ENCODE measurements at regions of chr1 and their contacts with region 1.

Region 1: DNA sequence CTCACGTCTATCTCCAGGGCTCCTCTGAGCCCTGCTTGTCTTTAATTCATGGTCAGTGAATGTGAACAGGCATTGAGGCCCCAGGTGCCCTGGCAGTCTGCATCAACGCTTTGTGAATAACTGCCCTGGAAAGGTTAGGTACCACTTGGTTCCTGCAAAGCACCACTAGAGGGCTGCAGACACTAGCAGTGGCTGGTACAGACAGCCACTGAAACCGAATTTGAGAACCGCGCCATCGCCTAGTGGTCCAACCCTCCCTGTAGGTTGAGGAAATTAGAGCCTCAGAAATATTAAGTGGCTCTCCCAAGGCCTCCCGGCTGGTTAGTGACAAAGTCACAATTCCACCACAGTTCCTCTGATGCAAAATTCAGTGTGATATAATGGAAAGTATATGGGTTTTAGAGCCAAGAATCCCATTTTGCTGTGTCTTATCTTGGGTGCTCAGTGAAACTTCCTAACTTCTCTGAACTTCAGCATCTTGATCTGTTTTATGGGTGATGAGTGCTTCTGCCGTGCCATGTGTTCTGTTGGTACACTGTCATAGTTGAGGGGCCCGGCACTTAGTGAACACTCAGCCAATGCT is 46.2 kb upstream of the BCL9 start:
- DNase-seq: peak; percentile 78 to 86
- ATAC-seq: peak; percentile 92
- H3K4me3 ChIP-seq: no peak overlapping the region
- H3K27ac ChIP-seq: no peak overlapping the region
- H3K4me1 ChIP-seq: no peaks in the 10 kb centered on the region
- H3K27me3 ChIP-seq: no peaks in the 10 kb centered on the region

Region 2: DNA sequence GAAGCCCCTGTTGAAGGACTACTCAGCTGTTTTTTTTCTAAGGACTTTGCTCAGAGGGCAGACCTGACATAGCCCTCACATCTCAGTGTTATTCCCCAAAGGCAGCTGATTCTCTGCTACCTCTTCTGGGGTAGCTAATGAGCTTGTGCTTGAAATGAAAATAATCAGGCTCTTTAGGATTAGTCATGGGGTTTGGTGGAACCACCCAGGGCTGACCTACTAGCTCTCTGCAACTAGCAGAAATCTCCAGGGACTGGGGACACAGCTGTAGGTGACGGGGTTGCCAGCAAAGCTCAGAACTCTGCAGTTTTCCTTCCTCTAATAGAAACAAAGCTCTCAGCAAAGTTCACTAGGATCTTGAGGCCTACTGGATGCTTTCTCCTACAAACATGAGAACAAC is 60.2 kb before region 1 on chr1:
- intact Hi-C with region 1: no loop called
- DNase-seq: no peak
- ATAC-seq: no peak
- H3K4me3 ChIP-seq: no peak overlapping the region
- H3K27ac ChIP-seq: no peak overlapping the region
- H3K4me1 ChIP-seq: no peaks in the 10 kb centered on the region
- H3K27me3 ChIP-seq: no peaks in the 10 kb centered on the region

Region 3: DNA sequence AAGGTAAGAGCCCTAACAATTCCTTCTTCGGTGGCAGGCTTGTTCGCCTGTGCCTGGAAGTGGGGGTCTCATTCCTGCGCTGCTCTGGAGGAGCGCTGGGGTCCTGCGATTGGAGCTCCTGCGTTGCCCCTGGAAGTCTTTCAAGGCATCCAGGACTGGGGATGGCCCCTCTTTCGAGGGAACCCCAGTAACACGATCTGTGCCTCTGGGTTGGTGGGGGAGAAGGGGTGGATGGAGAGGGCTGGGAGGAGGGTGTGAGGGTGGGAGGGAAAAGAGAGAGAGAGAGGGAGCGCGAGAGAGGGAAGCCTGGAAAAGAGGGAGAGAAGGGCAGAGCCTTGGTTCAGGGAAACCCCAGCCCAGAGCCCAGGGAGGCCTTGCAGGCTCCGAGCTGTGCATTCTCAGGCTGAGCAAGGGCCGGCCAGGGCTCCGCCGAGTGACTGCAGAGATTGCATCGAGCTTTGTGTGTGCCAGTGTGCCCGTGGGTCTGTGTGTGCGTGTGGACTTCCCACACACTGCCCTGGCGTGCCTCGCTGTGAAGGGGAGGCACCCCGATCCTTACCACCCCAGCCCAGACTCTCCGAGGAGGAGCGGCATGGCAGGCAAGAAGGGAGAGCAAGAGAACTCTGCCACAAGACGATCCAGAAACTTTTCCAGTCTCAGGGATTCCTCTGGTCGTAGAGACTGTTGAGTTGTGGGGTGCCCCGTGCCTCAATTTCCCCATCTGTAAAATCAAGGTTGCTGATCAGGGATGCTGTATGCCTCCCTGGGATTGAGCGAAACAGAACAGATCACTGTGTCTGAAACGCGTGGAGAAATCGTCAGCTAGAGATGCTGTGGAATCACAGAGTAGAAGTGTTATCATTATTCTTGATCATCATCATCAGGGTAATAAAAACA is 46.8 kb after region 1 on chr1:
- intact Hi-C with region 1: loop called (anchors 5 kb)
- DNase-seq: peak; percentile 66 to 82
- ATAC-seq: peak; percentile 81
- H3K4me3 ChIP-seq: peak overlapping the region; percentile 63 to 92
- H3K27ac ChIP-seq: peak overlapping the region; percentile 0 to 95
- H3K4me1 ChIP-seq: peaks cover 0 to 4% of the 10 kb centered on the region in 2 donors
- H3K27me3 ChIP-seq: no peaks in the 10 kb centered on the region

Region 4: GRCh38 chr1:147627435-147628110 is 132.5 kb after region 1 on chr1:
- intact Hi-C with region 1: loop called (anchors 2 to 5 kb)
- DNase-seq: peak in 1 of 2 donors; percentile 81
- ATAC-seq: peak; percentile 83
- H3K4me3 ChIP-seq: no peak overlapping the region
- H3K27ac ChIP-seq: no peak overlapping the region
- H3K4me1 ChIP-seq: no peaks in the 10 kb centered on the region
- H3K27me3 ChIP-seq: no peaks in the 10 kb centered on the region

Region 5: DNA sequence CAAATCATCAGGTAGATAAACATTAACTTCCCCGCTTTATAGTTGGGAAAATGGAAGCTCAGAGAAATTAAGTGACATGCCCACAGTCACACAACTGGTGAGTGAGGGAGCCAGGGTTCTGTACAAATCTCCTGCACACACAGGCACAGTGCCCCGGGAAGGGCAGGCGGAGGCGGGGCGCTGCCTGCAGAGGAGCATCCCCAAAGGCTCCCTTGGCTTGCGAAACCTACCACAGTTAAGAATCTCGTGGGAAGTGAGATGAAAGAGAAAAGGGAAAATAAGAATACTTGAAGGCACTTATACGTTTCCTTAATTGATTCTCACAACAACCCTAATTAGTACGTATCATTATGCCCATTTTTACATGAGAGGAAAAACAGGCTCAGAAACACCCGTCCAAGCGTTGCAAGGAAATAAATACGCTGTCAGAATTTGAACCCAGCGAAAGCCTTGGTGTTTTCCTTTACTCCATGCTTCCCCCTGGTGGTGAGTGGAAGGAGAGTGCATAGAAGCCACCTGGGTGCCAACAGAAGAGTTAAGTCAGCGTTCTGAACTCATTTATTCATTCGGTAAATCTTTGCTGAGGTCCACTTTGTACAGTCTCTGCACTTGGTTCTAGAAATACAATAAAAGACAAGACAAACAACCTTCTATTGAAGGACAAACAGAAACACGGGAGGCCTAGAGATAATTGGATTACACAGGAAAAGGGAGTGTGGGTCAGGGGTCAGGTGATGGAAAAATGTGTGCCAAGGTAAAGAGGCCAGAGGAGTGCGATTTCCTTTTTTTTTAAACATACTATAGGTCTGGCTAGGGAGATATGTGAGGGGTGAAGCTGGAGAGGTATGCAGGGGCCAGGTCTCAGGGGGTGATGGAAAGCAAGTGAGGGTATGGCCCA is 146.9 kb after region 1 on chr1:
- intact Hi-C with region 1: loop called in 1 of 2 experiments (anchors 1 kb)
- DNase-seq: no peak
- ATAC-seq: peak; percentile 76
- H3K4me3 ChIP-seq: no peak overlapping the region
- H3K27ac ChIP-seq: no peak overlapping the region
- H3K4me1 ChIP-seq: no peaks in the 10 kb centered on the region
- H3K27me3 ChIP-seq: no peaks in the 10 kb centered on the region

Region 6: DNA sequence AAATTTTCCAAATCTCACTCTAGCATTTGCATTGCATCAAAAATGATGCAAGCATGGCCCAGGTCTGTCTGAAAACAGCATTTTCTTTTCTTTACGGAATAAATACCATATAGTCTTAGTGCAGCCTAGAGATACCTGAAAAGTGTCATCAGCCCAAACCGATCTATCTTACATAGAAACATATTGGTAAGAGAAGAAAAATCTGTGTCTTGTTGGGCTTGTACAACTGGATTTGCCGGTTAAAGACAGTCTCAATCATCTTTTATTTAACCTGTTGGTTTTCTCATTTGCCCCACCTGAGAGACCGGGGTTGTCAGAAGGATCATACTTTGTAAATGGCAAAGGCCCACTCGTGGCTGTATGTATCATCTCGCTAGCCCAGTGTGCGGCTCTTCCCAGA is 159.5 kb after region 1 on chr1:
- intact Hi-C with region 1: no loop called
- DNase-seq: no peak
- ATAC-seq: no peak
- H3K4me3 ChIP-seq: no peak overlapping the region
- H3K27ac ChIP-seq: no peak overlapping the region
- H3K4me1 ChIP-seq: no peaks in the 10 kb centered on the region
- H3K27me3 ChIP-seq: no peaks in the 10 kb centered on the region

Region 7: DNA sequence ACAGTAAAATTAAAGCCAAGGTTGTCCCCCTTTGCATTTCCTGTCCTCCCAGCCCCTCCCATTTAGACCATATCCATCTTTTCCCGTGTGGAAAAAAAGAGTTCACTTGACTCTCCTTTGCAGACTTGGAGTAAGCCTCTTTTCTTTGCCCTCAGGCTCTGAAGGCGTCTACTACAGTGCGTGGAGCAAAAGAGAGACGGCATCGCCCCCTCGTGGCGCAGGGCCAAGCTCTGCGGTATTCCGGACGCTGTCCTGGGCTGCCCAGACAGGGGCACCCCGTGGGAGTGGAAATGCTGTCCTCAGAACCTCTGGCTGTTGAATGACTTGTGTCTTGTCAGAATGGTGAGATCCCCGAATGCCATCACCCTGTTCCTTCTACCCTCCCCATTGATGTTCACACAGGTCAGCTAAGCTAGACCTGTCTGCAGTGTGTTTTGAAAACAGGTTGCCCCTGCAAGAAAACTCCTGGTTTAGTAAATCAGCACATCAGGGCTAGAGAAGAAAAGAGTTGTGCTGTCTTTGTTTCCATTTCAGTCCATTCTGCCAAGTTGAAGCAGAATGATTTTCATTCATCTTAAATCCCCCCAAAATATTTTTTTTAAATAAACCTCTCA is 395.2 kb after region 1 on chr1:
- intact Hi-C with region 1: loop called (anchors 2 to 10 kb)
- DNase-seq: peak; percentile 81 to 92
- ATAC-seq: peak; percentile 84
- H3K4me3 ChIP-seq: no peak overlapping the region
- H3K27ac ChIP-seq: no peak overlapping the region
- H3K4me1 ChIP-seq: no peaks in the 10 kb centered on the region
- H3K27me3 ChIP-seq: no peaks in the 10 kb centered on the region